ENCODE measurements at regions of chr11 and their contacts with region 1.

Region 1: DNA sequence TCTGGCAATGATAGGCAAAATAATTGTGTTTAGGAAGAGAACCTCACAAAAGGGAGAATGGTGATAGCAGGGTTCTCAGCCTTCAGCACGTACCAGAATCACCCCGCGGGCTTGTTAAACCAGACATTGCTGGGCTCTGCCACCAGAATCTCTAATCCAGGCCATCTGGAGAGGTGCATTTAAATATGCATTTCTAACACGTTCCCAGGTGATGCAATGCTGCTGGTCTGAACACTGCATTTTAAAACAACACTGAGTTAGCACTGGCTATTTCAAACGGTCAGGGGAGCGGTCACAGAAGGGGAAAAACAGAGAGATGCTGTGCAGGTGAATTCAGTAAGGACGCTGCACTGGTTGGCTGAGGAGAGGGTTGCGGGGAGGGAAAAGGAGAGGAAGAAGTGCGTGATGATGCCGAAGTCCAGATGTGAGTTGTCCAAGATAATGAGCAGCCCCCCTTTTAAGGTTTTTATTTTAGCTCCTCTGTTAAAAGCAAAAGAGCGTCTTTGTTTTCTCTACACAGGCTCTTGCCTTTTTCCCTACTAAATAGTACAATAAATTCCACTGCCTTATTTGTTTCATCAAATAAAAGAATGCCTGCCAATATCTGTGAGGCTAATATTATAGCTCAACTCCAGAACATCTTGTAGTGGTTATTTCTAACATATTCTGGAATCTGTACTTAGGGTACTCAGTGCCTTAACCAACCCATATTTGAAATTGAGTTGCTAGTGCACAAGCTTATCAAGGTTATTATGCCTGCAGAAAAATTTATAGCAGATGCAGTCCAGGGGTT is 109.6 kb upstream of the POU2AF2 start:
- DNase-seq: no peak
- H3K4me3 ChIP-seq: no peak overlapping the region
- H3K27ac ChIP-seq: no peak overlapping the region
- H3K4me1 ChIP-seq: no peaks in the 10 kb centered on the region
- H3K27me3 ChIP-seq: no peaks in the 10 kb centered on the region
- CTCF ChIP-seq: no peak

Region 2: DNA sequence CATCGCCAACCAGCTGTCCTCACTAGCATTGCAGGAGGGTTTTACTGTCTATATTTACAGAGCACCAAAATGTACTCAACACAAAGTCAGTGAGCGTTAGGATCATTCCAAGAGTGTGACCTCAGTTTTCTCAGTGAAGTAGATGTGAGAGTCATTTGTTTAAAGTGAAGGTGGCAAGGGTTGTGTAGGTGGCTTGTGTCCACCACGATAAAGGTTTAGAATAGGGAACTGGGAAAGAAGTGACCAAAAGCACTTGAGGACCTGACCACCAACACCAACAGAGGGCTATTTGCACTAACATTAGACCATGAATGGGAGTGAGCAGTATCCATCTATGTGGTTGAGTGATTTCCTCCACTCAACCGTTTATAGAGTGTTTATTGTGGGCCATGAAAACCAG is 42.9 kb before region 1 on chr11:
- intact Hi-C with region 1: loop called (anchors 2 kb)
- DNase-seq: no peak
- H3K4me3 ChIP-seq: no peak overlapping the region
- H3K27ac ChIP-seq: no peak overlapping the region
- H3K4me1 ChIP-seq: no peaks in the 10 kb centered on the region
- H3K27me3 ChIP-seq: no peaks in the 10 kb centered on the region
- CTCF ChIP-seq: no peak

Measured in tibial artery (tissue), 4 donors.